Naive thymus-derived CD4-positive, alpha-beta T cell (primary cell): ENCODE measurements at regions of chr1 and their contacts with region 1.

Region 1: DNA sequence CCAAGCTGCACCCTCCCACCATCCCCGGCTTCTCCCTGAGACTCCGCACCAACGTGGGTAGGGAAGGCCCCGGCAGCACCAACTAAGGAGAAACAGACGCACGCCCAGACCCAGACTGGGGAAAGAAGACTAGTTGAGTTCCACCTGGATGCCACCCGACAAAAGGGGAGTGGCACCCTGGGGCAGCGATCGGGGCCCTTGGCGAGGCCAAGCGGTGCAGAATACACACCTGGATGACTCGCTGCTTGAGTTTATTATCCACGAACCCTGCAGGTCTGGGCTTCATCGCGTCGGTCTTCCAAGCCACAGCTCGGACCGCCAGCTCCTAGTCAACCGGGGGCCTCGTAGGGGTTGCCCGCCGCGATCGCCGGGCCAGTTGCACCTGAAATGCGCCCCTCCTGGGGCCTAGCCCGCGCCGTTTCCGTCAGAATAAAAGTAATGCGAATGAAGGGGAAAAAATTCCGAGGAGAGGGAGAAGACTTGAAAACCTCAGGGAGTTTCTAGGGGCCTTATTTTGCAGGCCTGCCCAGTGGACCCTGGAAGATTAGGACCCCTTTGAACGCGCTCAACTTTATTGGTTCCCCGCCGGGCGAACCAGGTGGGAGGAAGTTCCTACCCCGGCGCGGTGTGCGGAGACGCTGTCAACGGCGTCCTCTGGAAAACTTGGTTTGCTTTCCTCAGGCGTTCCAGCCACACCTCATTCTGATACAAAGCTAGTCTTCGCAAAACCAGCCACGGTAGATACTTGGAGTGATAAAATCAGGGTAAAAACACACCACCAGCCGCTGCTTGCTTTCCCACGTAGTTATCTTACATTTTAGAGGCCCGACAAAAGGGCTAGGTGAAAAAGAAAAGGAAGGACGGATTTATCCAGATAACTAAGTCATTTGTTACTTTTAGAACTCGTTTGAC is at the start of gene NVL:
- DNase-seq: peak; percentile 71 to 84 (median 79)
- ATAC-seq: peak; percentile 91
- H3K4me3 ChIP-seq: peak within 1 kb of the TSS; percentile 96
- H3K4me3 Mint-ChIP-seq: peak within 1 kb of the TSS; percentile 91 to 100 (median 97)
- H3K27ac ChIP-seq: peak within 1 kb of the TSS; percentile 90
- H3K27ac Mint-ChIP-seq: peak within 1 kb of the TSS; percentile 97 to 100 (median 99)
- H3K4me1 ChIP-seq: peaks cover 3 to 6% of the 10 kb centered on the region in 2 donors
- H3K4me1 Mint-ChIP-seq: peaks cover 29 to 63% (median 47%) of the 10 kb centered on the region in 7 donors
- H3K27me3 ChIP-seq: no peaks in the 10 kb centered on the region
- H3K27me3 Mint-ChIP-seq: no peaks in the 10 kb centered on the region
- total RNA-seq, gene NVL: 23.9 to 48.6 (median 44.7) TPM

Region 2: GRCh38 chr1:223695941-223696340 is 634.2 kb before region 1 on chr1:
- CTCF ChIA-PET with region 1: no interaction called
- POLR2A ChIA-PET with region 1: no interaction called
- intact Hi-C with region 1: loop called (anchors 1 to 5 kb)
- DNase-seq: no peak
- ATAC-seq: no peak
- H3K4me3 ChIP-seq: no peak overlapping the region
- H3K4me3 Mint-ChIP-seq: no peak overlapping the region
- H3K27ac ChIP-seq: no peak overlapping the region
- H3K27ac Mint-ChIP-seq: no peak overlapping the region
- H3K4me1 ChIP-seq: no peaks in the 10 kb centered on the region
- H3K4me1 Mint-ChIP-seq: peaks cover 0 to 11% (median 6%) of the 10 kb centered on the region in 7 donors
- H3K27me3 ChIP-seq: no peaks in the 10 kb centered on the region
- H3K27me3 Mint-ChIP-seq: peaks cover 0 to 5% (median 0%) of the 10 kb centered on the region in 5 donors

Region 3: GRCh38 chr1:223712194-223712849 is 617.8 kb before region 1 on chr1 and contains the start of gene CAPN2:
- CTCF ChIA-PET with region 1: no interaction called
- POLR2A ChIA-PET with region 1: no interaction called
- intact Hi-C with region 1: loop called (anchors 5 kb)
- DNase-seq: peak; percentile 29 to 78 (median 51)
- ATAC-seq: peak; percentile 78
- H3K4me3 ChIP-seq: peak within 1 kb of the TSS; percentile 61
- H3K4me3 Mint-ChIP-seq: peak within 1 kb of the TSS; percentile 70 to 93 (median 84)
- H3K27ac ChIP-seq: peak within 1 kb of the TSS; percentile 83
- H3K27ac Mint-ChIP-seq: peak within 1 kb of the TSS; percentile 82 to 93 (median 88)
- H3K4me1 ChIP-seq: peaks cover 48 to 53% of the 10 kb centered on the region in 2 donors
- H3K4me1 Mint-ChIP-seq: peaks cover 52 to 69% (median 63%) of the 10 kb centered on the region in 7 donors
- H3K27me3 ChIP-seq: no peaks in the 10 kb centered on the region
- H3K27me3 Mint-ChIP-seq: peaks cover 0 to 8% (median 0%) of the 10 kb centered on the region in 5 donors
- total RNA-seq, gene CAPN2: 86.1 to 195 (median 117) TPM

Region 4: GRCh38 chr1:224113918-224114786 is 215.9 kb before region 1 on chr1 and contains the start of gene FBXO28:
- CTCF ChIA-PET with region 1: interaction called, 10 read pairs
- POLR2A ChIA-PET with region 1: interaction called, 9 read pairs
- intact Hi-C with region 1: loop called (anchors 1 kb)
- DNase-seq: peak; percentile 69 to 94 (median 88)
- ATAC-seq: peak; percentile 96
- H3K4me3 ChIP-seq: peak within 1 kb of the TSS; percentile 92
- H3K4me3 Mint-ChIP-seq: peak within 1 kb of the TSS; percentile 89 to 96 (median 92)
- H3K27ac ChIP-seq: peak within 1 kb of the TSS; percentile 92
- H3K27ac Mint-ChIP-seq: peak within 1 kb of the TSS; percentile 89 to 96 (median 94)
- H3K4me1 ChIP-seq: peaks cover 4 to 14% of the 10 kb centered on the region in 2 donors
- H3K4me1 Mint-ChIP-seq: peaks cover 11 to 41% (median 30%) of the 10 kb centered on the region in 7 donors
- H3K27me3 ChIP-seq: no peaks in the 10 kb centered on the region
- H3K27me3 Mint-ChIP-seq: peaks cover 0 to 26% (median 11%) of the 10 kb centered on the region in 5 donors
- total RNA-seq, gene FBXO28: 25.2 to 37.8 (median 26.5) TPM

Region 5: DNA sequence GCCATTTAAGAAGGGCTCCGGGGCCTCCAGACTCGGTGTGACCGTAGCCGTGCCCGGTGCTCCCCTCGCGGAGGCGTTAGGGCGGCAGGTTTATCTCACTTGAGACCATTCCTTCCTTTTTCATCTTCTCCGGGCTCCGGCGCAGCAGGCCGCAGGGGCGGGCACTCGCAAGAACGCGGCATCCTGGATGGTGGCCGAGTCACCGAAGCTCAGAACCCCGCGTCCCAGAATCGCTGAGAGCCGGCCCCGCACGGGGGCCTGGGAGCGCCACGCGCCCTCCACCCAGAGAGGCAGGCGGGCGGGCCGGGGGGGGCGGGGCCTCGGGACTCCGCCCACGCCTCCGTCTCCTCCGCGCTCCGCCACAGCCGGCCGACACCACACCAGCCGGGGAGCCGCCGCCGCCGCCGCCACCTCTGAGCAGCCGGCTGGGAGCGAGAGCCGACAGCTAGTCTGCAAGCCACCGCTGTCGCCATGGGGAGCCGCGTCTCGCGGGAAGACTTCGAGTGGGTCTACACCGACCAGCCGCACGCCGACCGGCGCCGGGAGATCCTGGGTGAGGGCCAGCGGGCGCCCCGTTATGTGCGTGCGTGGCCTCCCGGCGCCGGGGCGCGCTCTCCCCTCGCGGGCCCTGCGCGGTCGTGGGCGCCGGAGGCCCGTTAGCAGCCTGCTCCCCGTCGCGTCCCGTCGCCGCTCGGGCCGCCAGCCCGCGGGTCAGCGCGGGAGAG is 147.1 kb before region 1 on chr1 and contains the start of gene DEGS1:
- CTCF ChIA-PET with region 1: no interaction called
- POLR2A ChIA-PET with region 1: interaction called, 3 read pairs
- intact Hi-C with region 1: loop called (anchors 1 kb)
- DNase-seq: peak; percentile 77 to 86 (median 84)
- ATAC-seq: peak; percentile 91
- H3K4me3 ChIP-seq: peak within 1 kb of the TSS; percentile 76
- H3K4me3 Mint-ChIP-seq: peak within 1 kb of the TSS; percentile 78 to 95 (median 90)
- H3K27ac ChIP-seq: peak within 1 kb of the TSS; percentile 92
- H3K27ac Mint-ChIP-seq: peak within 1 kb of the TSS; percentile 90 to 96 (median 93)
- H3K4me1 ChIP-seq: peaks cover 20 to 28% of the 10 kb centered on the region in 2 donors
- H3K4me1 Mint-ChIP-seq: peaks cover 35 to 56% (median 53%) of the 10 kb centered on the region in 7 donors
- H3K27me3 ChIP-seq: no peaks in the 10 kb centered on the region
- H3K27me3 Mint-ChIP-seq: no peaks in the 10 kb centered on the region
- total RNA-seq, gene DEGS1: 35.4 to 86.0 (median 38.3) TPM

Region 6: GRCh38 chr1:224356685-224357625 is 26.9 kb after region 1 on chr1 and contains the start of gene CNIH4:
- CTCF ChIA-PET with region 1: no interaction called
- POLR2A ChIA-PET with region 1: interaction called, 11 read pairs
- intact Hi-C with region 1: loop called (anchors 1 kb)
- DNase-seq: peak; percentile 79 to 95 (median 92)
- ATAC-seq: peak; percentile 99
- H3K4me3 ChIP-seq: peak within 1 kb of the TSS; percentile 67
- H3K4me3 Mint-ChIP-seq: peak within 1 kb of the TSS; percentile 87 to 98 (median 94)
- H3K27ac ChIP-seq: peak within 1 kb of the TSS; percentile 83
- H3K27ac Mint-ChIP-seq: peak within 1 kb of the TSS; percentile 71 to 95 (median 89)
- H3K4me1 ChIP-seq: peaks cover 16 to 27% of the 10 kb centered on the region in 2 donors
- H3K4me1 Mint-ChIP-seq: peaks cover 23 to 58% (median 44%) of the 10 kb centered on the region in 7 donors
- H3K27me3 ChIP-seq: no peaks in the 10 kb centered on the region
- H3K27me3 Mint-ChIP-seq: no peaks in the 10 kb centered on the region
- total RNA-seq, gene CNIH4: 28.1 to 42.0 (median 39.8) TPM

Region 7: GRCh38 chr1:224454397-224455066 is 124.4 kb after region 1 on chr1:
- CTCF ChIA-PET with region 1: interaction called, 8 read pairs
- POLR2A ChIA-PET with region 1: no interaction called
- intact Hi-C with region 1: loop called (anchors 2 kb)
- DNase-seq: no peak
- ATAC-seq: no peak
- H3K4me3 ChIP-seq: no peak overlapping the region
- H3K4me3 Mint-ChIP-seq: no peak overlapping the region
- H3K27ac ChIP-seq: no peak overlapping the region
- H3K27ac Mint-ChIP-seq: peak overlapping the region in 4 of 9 donors; percentile 20 to 68 (median 44)
- H3K4me1 ChIP-seq: peaks cover 3% of the 10 kb centered on the region in 2 donors
- H3K4me1 Mint-ChIP-seq: peaks cover 13 to 35% (median 19%) of the 10 kb centered on the region in 7 donors
- H3K27me3 ChIP-seq: no peaks in the 10 kb centered on the region
- H3K27me3 Mint-ChIP-seq: no peaks in the 10 kb centered on the region